ENCODE measurements at regions of chr1 and their contacts with region 1.

Region 1: GRCh38 chr1:1906185-1907097 is 8.6 kb upstream of the CALML6 start:
- DNase-seq: peak; percentile 89
- ATAC-seq: peak; percentile 68
- H3K4me3 Mint-ChIP-seq: peak overlapping the region; percentile 42; the same call in 1 of the 2 replicates
- H3K27ac Mint-ChIP-seq: peak overlapping the region; percentile 84; the same call in 1 of the 2 replicates
- H3K4me1 Mint-ChIP-seq: peaks cover 19% of the 10 kb centered on the region
- H3K27me3 Mint-ChIP-seq: no peaks in the 10 kb centered on the region; the same call in 1 of the 2 replicates
- CTCF ChIP-seq: peak; percentile 63

Region 2: GRCh38 chr1:1678581-1679390 is 227.7 kb before region 1 on chr1:
- CTCF ChIA-PET with region 1: interaction called, 10 read pairs
- POLR2A ChIA-PET with region 1: no interaction called
- DNase-seq: peak; percentile 70
- ATAC-seq: peak; percentile 79
- H3K4me3 Mint-ChIP-seq: no peak overlapping the region
- H3K27ac Mint-ChIP-seq: peak overlapping the region; percentile 84
- H3K4me1 Mint-ChIP-seq: peaks cover 29% of the 10 kb centered on the region
- H3K27me3 Mint-ChIP-seq: no peaks in the 10 kb centered on the region
- CTCF ChIP-seq: peak; percentile 43; the same call in 1 of the 2 replicates

Region 3: GRCh38 chr1:1788646-1789431 is 117.6 kb before region 1 on chr1:
- CTCF ChIA-PET with region 1: interaction called, 42 read pairs
- POLR2A ChIA-PET with region 1: no interaction called
- DNase-seq: peak; percentile 69
- ATAC-seq: peak; percentile 58
- H3K4me3 Mint-ChIP-seq: no peak overlapping the region
- H3K27ac Mint-ChIP-seq: peak overlapping the region; percentile 39
- H3K4me1 Mint-ChIP-seq: 0 out of 2 replicates have a peak, but pooled peaks cover 2% of the 10 kb centered on the region
- H3K27me3 Mint-ChIP-seq: no peaks in the 10 kb centered on the region
- CTCF ChIP-seq: no peak

Region 4: GRCh38 chr1:1847061-1847850 is 59.2 kb before region 1 on chr1:
- CTCF ChIA-PET with region 1: interaction called, 11 read pairs
- POLR2A ChIA-PET with region 1: interaction called, 6 read pairs
- DNase-seq: no peak
- ATAC-seq: no peak
- H3K4me3 Mint-ChIP-seq: no peak overlapping the region
- H3K27ac Mint-ChIP-seq: peak overlapping the region; percentile 89
- H3K4me1 Mint-ChIP-seq: peaks cover 36% of the 10 kb centered on the region
- H3K27me3 Mint-ChIP-seq: no peaks in the 10 kb centered on the region
- CTCF ChIP-seq: no peak

Region 5: GRCh38 chr1:1890506-1891348 is 15.7 kb before region 1 on chr1 and contains the start of gene GNB1:
- CTCF ChIA-PET with region 1: interaction called, 28 read pairs
- POLR2A ChIA-PET with region 1: interaction called, 3 read pairs
- DNase-seq: peak; percentile 73
- ATAC-seq: peak; percentile 58
- H3K4me3 Mint-ChIP-seq: peak within 1 kb of the TSS; percentile 81
- H3K27ac Mint-ChIP-seq: peak within 1 kb of the TSS; percentile 79; the same call in 1 of the 2 replicates
- H3K4me1 Mint-ChIP-seq: peaks cover 50% of the 10 kb centered on the region
- H3K27me3 Mint-ChIP-seq: no peaks in the 10 kb centered on the region; the same call in 1 of the 2 replicates
- CTCF ChIP-seq: no peak
- total RNA-seq, gene GNB1: 339 to 383 TPM (median 360 TPM) in 3 replicates

Region 6: GRCh38 chr1:1943834-1944570 is 37.6 kb after region 1 on chr1:
- CTCF ChIA-PET with region 1: interaction called, 13 read pairs
- POLR2A ChIA-PET with region 1: no interaction called
- DNase-seq: peak; percentile 85
- ATAC-seq: peak; percentile 94
- H3K4me3 Mint-ChIP-seq: peak overlapping the region; percentile 43
- H3K27ac Mint-ChIP-seq: no peak overlapping the region; the same call in 1 of the 2 replicates
- H3K4me1 Mint-ChIP-seq: peaks cover 4% of the 10 kb centered on the region; the same call in 1 of the 2 replicates
- H3K27me3 Mint-ChIP-seq: no peaks in the 10 kb centered on the region
- CTCF ChIP-seq: peak; percentile 91

Region 7: GRCh38 chr1:1985375-1986050 is 79.1 kb after region 1 on chr1:
- CTCF ChIA-PET with region 1: no interaction called
- POLR2A ChIA-PET with region 1: no interaction called
- DNase-seq: no peak
- ATAC-seq: no peak
- H3K4me3 Mint-ChIP-seq: no peak overlapping the region
- H3K27ac Mint-ChIP-seq: peak overlapping the region; percentile 69
- H3K4me1 Mint-ChIP-seq: no peaks in the 10 kb centered on the region
- H3K27me3 Mint-ChIP-seq: no peaks in the 10 kb centered on the region; the same call in 1 of the 2 replicates
- CTCF ChIP-seq: no peak